ENCODE measurements at regions of chr22 and their contacts with region 1.

Region 1: GRCh38 chr22:24805790-24806662 is at the start of gene SGSM1:
- DNase-seq: peak; percentile 89 to 94
- ATAC-seq: peak; percentile 83
- H3K4me3 ChIP-seq: peak within 1 kb of the TSS; percentile 55 to 58
- H3K27ac ChIP-seq: peak within 1 kb of the TSS; percentile 15 to 79
- H3K4me1 ChIP-seq: no peaks in the 10 kb centered on the region
- H3K27me3 ChIP-seq: no peaks in the 10 kb centered on the region
- total RNA-seq, gene SGSM1: 9.2 to 9.5 TPM

Region 2: DNA sequence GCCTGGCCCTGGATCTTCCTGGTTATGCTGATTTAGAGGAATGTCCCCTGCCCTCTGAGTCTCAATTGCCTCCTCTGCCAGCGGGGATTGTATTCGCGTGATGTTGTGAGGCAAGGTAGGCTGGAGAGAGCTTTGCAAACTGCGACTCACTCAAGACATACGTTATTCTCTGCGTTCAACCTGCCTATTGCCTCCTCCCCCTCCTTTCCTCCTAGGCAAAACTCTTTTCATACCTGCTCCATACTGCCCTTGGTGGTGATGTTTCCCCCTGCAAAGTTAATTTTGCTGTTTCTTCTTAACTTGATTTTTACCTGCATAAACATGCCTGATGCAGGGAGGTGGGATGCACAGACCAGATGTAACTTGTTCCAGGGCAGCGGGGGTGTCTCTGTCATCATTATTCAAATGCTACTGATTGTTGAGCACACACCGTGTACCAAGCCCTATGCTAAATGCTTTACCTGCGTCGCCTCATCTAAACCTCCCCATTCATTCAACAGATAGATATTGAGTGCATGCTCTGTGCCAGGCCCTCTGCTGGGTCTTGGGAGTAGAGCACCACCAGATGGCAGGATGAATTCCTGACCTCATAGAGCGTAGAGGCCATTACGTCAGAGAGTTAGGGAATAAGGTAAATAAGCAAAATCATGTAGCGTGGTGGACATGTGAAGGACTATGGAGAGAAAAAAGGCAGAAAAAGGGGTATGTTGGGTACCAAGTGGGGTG is 29.0 kb after region 1 on chr22:
- intact Hi-C with region 1: loop called in 1 of 2 experiments (anchors 5 kb)
- DNase-seq: no peak
- ATAC-seq: no peak
- H3K4me3 ChIP-seq: no peak overlapping the region
- H3K27ac ChIP-seq: no peak overlapping the region
- H3K4me1 ChIP-seq: no peaks in the 10 kb centered on the region
- H3K27me3 ChIP-seq: no peaks in the 10 kb centered on the region

Region 3: DNA sequence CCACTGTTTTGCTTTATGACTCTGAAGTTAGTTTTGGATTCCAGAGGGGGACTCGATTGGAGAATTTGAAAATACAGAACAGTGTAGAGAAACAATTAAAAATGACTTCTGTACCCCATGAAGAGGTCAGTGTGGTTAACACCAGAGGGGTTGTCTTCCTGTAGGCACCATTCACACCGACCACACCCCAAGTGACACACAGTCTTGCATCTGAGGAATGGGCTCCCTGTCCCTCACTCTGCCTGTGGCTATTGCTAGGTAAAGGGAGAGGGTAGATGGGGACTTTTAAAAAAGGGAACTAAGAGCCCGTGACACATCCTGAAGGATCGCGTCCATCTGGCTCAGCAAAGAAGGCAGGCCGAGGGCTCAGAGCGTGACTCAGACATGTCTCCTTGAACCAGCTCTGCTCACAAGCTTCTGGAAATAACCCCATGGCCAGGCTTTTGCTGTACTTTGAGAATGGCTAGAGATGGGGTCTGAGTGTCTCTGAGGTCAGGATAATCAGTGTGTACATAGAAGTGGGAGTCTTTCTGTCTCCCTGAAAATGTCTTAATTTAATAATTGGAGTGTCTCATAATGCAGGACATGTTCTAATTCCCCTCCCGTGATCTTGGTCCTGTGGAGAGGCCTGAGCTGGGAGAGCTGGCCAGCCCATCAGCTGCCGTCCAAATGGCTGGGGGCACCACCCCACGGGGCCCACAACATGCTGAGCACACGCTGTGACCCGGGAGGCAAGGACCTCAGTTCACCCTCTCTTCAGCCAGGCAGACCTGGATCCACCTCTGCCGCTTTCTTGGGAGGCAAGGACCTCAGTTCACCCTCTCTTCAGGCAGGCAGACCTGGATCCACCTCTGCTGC is 39.2 kb after region 1 on chr22:
- intact Hi-C with region 1: loop called in 1 of 2 experiments (anchors 5 kb)
- DNase-seq: peak; percentile 82 to 86
- ATAC-seq: peak; percentile 65
- H3K4me3 ChIP-seq: no peak overlapping the region
- H3K27ac ChIP-seq: peak overlapping the region in 1 of 2 donors; percentile 89
- H3K4me1 ChIP-seq: no peaks in the 10 kb centered on the region
- H3K27me3 ChIP-seq: no peaks in the 10 kb centered on the region

Region 4: DNA sequence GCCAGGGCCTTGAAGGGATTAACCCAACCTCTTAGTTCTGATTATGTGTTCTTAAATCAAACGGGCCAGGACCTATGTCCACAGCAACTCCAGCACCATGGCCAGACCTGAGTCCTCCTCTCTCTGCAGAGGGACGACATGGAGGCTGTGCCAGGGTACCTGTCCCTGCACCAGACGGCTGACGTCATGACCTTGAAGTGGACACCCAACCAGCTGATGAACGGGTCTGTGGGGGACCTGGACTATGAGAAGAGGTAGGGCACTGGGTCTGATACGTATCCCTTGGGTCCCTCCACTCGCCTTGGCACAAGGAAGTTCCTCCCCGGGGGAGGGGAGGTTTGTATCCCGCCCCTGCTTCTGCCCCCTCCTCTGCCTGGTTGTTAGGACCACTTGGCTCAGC is 53.6 kb after region 1 on chr22:
- intact Hi-C with region 1: no loop called
- DNase-seq: no peak
- ATAC-seq: no peak
- H3K4me3 ChIP-seq: no peak overlapping the region
- H3K27ac ChIP-seq: no peak overlapping the region
- H3K4me1 ChIP-seq: no peaks in the 10 kb centered on the region
- H3K27me3 ChIP-seq: no peaks in the 10 kb centered on the region

Region 5: GRCh38 chr22:24894220-24894975 is 88.4 kb after region 1 on chr22:
- intact Hi-C with region 1: loop called (anchors 2 to 10 kb)
- DNase-seq: peak; percentile 91 to 92
- ATAC-seq: peak; percentile 92
- H3K4me3 ChIP-seq: no peak overlapping the region
- H3K27ac ChIP-seq: peak overlapping the region in 1 of 2 donors; percentile 58
- H3K4me1 ChIP-seq: no peaks in the 10 kb centered on the region
- H3K27me3 ChIP-seq: no peaks in the 10 kb centered on the region